ENCODE measurements at regions of chr15 and their contacts with region 1.

Region 1: DNA sequence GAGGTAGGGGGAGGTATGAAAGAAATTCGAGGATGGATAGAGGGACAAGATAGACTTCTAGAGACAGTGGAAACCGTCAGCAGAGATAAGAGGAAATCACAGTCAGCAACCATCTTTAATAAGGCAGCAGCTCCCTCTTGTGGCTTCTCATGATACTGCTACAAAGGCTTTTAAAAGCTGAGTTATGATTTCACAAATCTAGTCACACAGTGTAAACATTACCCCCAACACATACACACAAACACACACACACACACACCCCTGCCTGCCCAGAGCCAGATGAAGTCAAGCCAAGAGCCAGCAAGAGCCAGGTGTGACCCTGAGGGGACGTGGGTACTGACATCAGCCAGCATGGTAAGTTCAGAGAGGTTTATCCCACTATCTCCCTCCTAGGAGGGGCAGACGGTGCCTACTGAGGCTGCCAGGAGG is 18.9 kb upstream of the TGM5 start:
- DNase-seq: peak; percentile 72
- H3K4me3 Mint-ChIP-seq: no peak overlapping the region
- H3K27ac Mint-ChIP-seq: no peak overlapping the region
- H3K4me1 Mint-ChIP-seq: peaks cover 4% of the 10 kb centered on the region
- H3K27me3 Mint-ChIP-seq: peaks cover 9% of the 10 kb centered on the region

Region 2: GRCh38 chr15:43185157-43186017 is 100.2 kb before region 1 on chr15 and contains the start of gene CCNDBP1:
- CTCF ChIA-PET with region 1: interaction called, 12 read pairs
- DNase-seq: peak; percentile 94
- H3K4me3 Mint-ChIP-seq: peak within 1 kb of the TSS; percentile 97
- H3K27ac Mint-ChIP-seq: peak within 1 kb of the TSS; percentile 96
- H3K4me1 Mint-ChIP-seq: peaks cover 42% of the 10 kb centered on the region
- H3K27me3 Mint-ChIP-seq: no peaks in the 10 kb centered on the region

Region 3: GRCh38 chr15:43204016-43204901 is 81.4 kb before region 1 on chr15:
- CTCF ChIA-PET with region 1: interaction called, 22 read pairs
- DNase-seq: peak; percentile 70
- H3K4me3 Mint-ChIP-seq: no peak overlapping the region
- H3K27ac Mint-ChIP-seq: no peak overlapping the region
- H3K4me1 Mint-ChIP-seq: no peaks in the 10 kb centered on the region
- H3K27me3 Mint-ChIP-seq: peaks cover 38% of the 10 kb centered on the region

Region 4: GRCh38 chr15:43225201-43225949 is 60.2 kb before region 1 on chr15:
- CTCF ChIA-PET with region 1: interaction called, 199 read pairs
- DNase-seq: peak; percentile 63
- H3K4me3 Mint-ChIP-seq: no peak overlapping the region
- H3K27ac Mint-ChIP-seq: no peak overlapping the region
- H3K4me1 Mint-ChIP-seq: peaks cover 2% of the 10 kb centered on the region
- H3K27me3 Mint-ChIP-seq: peaks cover 13% of the 10 kb centered on the region

Region 5: DNA sequence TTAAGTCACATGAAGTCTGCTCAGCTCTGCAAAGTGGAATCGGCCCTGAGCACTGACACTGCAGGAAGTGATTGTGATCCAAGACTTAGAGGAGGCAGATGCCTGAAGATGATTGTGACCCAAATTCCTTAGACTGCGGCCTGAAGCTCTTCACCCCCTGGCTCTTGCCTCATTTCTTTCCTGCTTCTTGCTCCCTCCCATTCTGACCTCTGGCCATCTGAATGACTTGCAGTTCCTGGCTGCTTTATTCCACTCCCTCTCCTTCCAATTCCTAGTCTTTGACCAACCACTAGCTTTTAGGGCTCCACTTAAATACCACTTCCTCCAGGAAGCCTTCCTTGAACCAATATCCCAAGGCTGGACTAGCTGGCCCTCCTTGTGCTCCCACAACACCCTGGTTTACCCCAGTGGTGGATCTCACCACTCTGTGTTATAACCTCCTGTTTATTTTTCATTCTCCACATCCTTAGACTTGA is 54.9 kb before region 1 on chr15:
- CTCF ChIA-PET with region 1: interaction called, 199 read pairs
- DNase-seq: peak; percentile 6
- H3K4me3 Mint-ChIP-seq: no peak overlapping the region
- H3K27ac Mint-ChIP-seq: no peak overlapping the region
- H3K4me1 Mint-ChIP-seq: no peaks in the 10 kb centered on the region
- H3K27me3 Mint-ChIP-seq: peaks cover 39% of the 10 kb centered on the region

Region 6: DNA sequence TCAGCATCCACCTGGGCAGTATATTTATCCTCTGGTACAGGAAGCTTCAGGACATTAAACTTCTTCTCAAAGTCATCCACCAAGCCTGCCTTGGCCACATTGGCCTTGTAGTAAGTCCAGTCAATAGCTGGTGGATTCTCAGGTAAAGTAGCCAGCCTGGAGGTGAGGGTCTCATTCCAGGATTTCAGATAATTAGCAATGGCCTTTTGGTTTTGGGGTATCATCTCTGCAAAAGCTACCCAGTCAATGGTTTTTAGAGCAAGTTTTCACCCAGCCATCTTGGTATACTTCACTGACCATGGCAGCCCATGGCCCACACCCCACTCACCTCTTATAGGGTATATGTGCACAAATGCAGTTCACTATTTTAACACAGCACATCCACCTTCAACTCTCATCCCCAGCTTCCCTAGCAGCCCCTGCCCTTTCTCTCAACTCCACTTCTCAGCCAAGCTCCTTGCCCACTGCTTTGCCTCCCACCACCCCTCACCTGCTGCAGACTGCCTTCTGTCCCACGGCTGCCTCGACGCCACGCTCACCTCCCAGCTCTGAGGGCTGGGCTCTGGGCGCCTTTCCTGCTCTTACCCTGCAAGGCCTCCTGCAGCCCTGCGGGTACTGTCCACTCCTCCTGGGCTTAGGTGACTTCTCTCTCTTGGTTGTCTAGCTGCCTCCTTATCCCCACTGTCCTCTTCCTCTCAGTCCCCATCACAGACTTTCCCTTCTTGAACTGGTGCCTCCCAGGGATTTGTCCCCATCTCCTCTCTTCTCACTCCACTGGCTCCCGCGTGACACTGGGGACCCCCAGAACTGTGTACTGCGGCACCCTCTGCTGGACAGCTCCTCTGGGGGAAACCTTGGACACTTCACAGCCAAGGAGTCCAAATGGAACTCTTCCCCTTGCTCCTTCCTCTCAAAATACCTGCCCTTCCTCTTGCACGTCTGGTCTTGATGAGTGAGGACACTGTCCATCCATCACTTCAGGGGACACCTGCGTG is 17.2 kb before region 1 on chr15:
- CTCF ChIA-PET with region 1: interaction called, 30 read pairs
- DNase-seq: peak; percentile 32
- H3K4me3 Mint-ChIP-seq: no peak overlapping the region
- H3K27ac Mint-ChIP-seq: no peak overlapping the region
- H3K4me1 Mint-ChIP-seq: peaks cover 16% of the 10 kb centered on the region
- H3K27me3 Mint-ChIP-seq: peaks cover 50% of the 10 kb centered on the region

Region 7: DNA sequence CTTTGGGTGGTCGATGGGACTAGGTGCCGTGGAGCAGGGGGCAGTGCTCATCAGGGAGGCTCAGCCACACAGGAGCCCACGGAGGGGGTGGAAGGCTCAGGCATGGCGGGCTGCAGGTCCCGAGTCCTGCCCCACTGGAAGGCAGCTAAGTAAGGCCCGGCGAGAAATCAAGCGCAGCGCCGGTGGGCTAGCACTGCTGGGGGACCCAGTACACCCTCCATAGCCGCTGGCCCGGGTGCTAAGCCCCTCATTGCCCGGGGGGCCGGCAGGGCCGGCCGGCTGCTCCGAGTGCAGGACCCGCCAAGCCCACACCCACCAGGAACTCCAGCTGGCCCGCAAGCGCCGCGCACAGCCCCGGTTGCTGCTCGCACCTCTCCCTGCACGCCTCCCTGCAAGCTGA is 188.3 kb after region 1 on chr15:
- CTCF ChIA-PET with region 1: no interaction called
- DNase-seq: no peak
- H3K4me3 Mint-ChIP-seq: no peak overlapping the region
- H3K27ac Mint-ChIP-seq: no peak overlapping the region
- H3K4me1 Mint-ChIP-seq: no peaks in the 10 kb centered on the region
- H3K27me3 Mint-ChIP-seq: no peaks in the 10 kb centered on the region